IMR-90 (cell line): ENCODE measurements at regions of chr16 and their contacts with region 1.

Region 1: DNA sequence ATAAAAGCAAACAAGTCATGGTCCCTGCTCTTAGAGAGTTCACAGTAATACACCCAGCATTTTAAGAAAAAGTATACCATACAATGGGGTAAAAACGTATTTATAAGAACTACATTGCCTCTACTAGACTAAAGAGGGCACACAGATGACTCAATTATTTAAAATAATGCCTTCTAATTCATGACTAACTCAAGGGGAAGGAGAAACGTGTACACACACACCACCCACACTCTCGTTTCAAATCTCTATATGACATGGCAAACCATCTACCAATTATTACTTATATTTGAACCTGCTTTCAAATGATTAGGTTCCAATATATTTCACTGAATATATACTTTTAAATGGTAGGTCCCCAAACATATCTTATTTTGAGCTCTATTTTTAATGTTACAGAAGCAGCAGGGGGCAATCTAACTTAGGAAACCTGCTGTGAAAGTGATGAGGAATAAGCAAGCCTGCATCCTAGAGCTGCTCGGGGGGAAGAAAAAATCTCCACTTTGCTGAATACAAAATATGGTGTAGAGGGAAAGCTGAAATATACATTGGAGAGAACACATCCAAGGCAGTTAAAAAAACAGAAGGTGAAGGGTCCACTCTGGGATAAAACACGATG is 232.4 kb upstream of the PSMD7 start:
- DNase-seq: peak; percentile 1
- ATAC-seq: no peak
- H3K4me3 ChIP-seq: no peak overlapping the region
- H3K27ac ChIP-seq: no peak overlapping the region
- H3K4me1 ChIP-seq: no peaks in the 10 kb centered on the region
- H3K27me3 ChIP-seq: no peaks in the 10 kb centered on the region
- CTCF ChIP-seq: 0 out of 2 replicates have a peak, but pooled peaks have one; percentile 12
- POLR2A ChIP-seq: no peak
- RAD21 ChIP-seq: no peak

Region 2: GRCh38 chr16:74226338-74226954 is 162.2 kb after region 1 on chr16:
- CTCF ChIA-PET with region 1: interaction called, 34 read pairs
- POLR2A ChIA-PET with region 1: no interaction called
- dilution Hi-C with region 1: no loop called
- in situ Hi-C with region 1: no loop called
- intact Hi-C with region 1: loop called (anchors 1 kb)
- DNase-seq: peak; percentile 31
- ATAC-seq: peak; percentile 57; the same call in 1 of the 2 replicates
- H3K4me3 ChIP-seq: no peak overlapping the region
- H3K27ac ChIP-seq: no peak overlapping the region
- H3K4me1 ChIP-seq: no peaks in the 10 kb centered on the region
- H3K27me3 ChIP-seq: no peaks in the 10 kb centered on the region; the same call in 1 of the 2 replicates
- CTCF ChIP-seq: peak; percentile 47
- POLR2A ChIP-seq: no peak
- RAD21 ChIP-seq: peak; percentile 42

Region 3: GRCh38 chr16:74275002-74275636 is 210.9 kb after region 1 on chr16:
- CTCF ChIA-PET with region 1: interaction called, 4 read pairs
- POLR2A ChIA-PET with region 1: no interaction called
- dilution Hi-C with region 1: no loop called
- in situ Hi-C with region 1: no loop called
- intact Hi-C with region 1: loop called (anchors 2 kb)
- DNase-seq: peak; percentile 28
- ATAC-seq: no peak
- H3K4me3 ChIP-seq: no peak overlapping the region
- H3K27ac ChIP-seq: no peak overlapping the region
- H3K4me1 ChIP-seq: no peaks in the 10 kb centered on the region
- H3K27me3 ChIP-seq: no peaks in the 10 kb centered on the region; the same call in 1 of the 2 replicates
- CTCF ChIP-seq: peak; percentile 62
- POLR2A ChIP-seq: no peak
- RAD21 ChIP-seq: peak; percentile 70